ENCODE measurements at regions of chr17 and their contacts with region 1.

Region 1: GRCh38 chr17:4715063-4715744 is 4.8 kb downstream of the ARRB2 start:
- DNase-seq: peak in 8 of 9 donors; percentile 39 to 49 (median 46)
- ATAC-seq: no peak
- H3K4me3 ChIP-seq: peak overlapping the region; percentile 48
- H3K4me3 Mint-ChIP-seq: peak overlapping the region; percentile 74 to 97 (median 84)
- H3K27ac ChIP-seq: peak overlapping the region; percentile 73
- H3K27ac Mint-ChIP-seq: peak overlapping the region; percentile 89 to 96 (median 93)
- H3K4me1 ChIP-seq: peaks cover 39 to 41% of the 10 kb centered on the region in 2 donors
- H3K4me1 Mint-ChIP-seq: peaks cover 32 to 54% (median 47%) of the 10 kb centered on the region in 7 donors
- H3K27me3 ChIP-seq: no peaks in the 10 kb centered on the region
- H3K27me3 Mint-ChIP-seq: no peaks in the 10 kb centered on the region

Region 2: DNA sequence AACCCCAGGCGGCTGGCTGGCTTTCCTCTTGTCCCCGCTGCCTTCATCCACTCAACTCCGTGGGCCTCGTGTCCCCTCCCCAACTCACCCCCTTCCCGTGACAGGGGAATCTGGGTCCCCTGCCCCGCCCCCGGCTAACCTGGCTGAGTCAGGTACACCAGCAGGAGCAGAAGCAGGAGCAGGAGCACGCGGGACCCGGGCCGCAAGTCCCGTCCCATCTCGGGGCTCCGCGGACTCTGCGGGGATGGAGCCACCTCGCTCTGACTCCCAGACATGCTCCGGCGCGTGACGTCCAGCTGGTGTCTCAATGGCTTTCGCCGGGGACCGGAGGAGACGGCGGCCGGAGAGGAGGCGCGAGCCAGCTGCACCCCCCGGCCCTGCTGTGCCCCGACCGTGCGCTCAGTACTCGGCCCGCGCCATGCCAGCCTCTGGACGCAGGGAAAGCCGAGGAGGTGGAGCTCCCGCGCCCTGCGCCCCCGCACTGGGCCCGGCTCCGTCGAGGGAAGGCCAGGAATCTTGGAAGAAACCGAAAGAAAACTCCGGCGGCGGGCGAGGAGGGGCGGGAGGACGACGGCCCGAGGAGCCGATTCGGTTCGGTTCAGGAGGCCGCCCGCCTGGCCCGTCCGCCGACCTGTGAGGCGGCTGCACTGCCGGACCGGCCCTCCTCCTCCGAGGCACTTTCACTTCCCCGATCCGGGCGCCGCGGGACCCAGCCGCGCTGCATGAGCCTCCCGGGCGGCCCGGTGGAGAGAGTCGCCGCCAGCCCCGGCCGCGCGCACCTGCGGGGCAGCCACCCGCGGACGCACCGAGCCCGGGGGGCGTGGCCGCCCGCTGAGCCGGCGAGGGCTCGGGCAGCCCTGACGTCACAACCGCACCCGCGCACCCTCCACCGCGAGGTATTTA is 24.2 kb after region 1 on chr17 and contains the starts of genes CXCL16 and ZMYND15:
- CTCF ChIA-PET with region 1: no interaction called
- POLR2A ChIA-PET with region 1: interaction called, 12 read pairs
- intact Hi-C with region 1: no loop called
- DNase-seq: peak; percentile 58 to 71 (median 64)
- ATAC-seq: peak; percentile 70
- H3K4me3 ChIP-seq: peak within 1 kb of the TSS; percentile 72
- H3K4me3 Mint-ChIP-seq: peak within 1 kb of the TSS; percentile 85 to 95 (median 92)
- H3K27ac ChIP-seq: peak within 1 kb of the TSS; percentile 49
- H3K27ac Mint-ChIP-seq: peak within 1 kb of the TSS; percentile 51 to 97 (median 92)
- H3K4me1 ChIP-seq: peaks cover 12 to 15% of the 10 kb centered on the region in 2 donors
- H3K4me1 Mint-ChIP-seq: peaks cover 12 to 25% (median 18%) of the 10 kb centered on the region in 7 donors
- H3K27me3 ChIP-seq: no peaks in the 10 kb centered on the region
- H3K27me3 Mint-ChIP-seq: peaks cover 0 to 36% (median 6%) of the 10 kb centered on the region in 5 donors
- total RNA-seq, gene CXCL16: 2.6 to 68.0 (median 3.4) TPM
- total RNA-seq, gene ZMYND15: 0.22 to 5.2 (median 1.4) TPM in 4 of 5 experiments, not detected in the other

Region 3: DNA sequence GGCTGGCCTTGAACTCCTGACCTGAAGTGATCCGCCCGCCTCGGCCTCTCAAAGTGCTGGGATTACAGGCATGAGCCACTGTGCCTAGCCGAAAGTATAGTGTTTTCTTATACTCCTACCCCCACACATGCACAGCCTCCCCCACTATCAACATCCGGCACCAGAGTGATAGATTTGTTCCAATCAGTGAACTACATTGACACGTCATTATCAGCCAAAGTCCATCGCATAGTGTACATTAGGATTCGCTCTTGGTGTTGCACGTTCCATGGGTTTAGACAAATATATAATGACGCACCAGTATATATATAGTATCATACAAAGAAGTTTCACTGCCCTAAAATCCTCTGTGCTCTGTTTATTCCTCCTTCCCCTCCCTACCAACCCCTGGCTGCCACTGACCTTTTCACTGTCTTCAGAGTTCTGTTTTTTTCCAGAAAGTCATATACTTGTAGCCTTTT is 44.6 kb after region 1 on chr17:
- CTCF ChIA-PET with region 1: no interaction called
- POLR2A ChIA-PET with region 1: no interaction called
- intact Hi-C with region 1: no loop called
- DNase-seq: no peak
- ATAC-seq: peak; percentile 67
- H3K4me3 ChIP-seq: no peak overlapping the region
- H3K4me3 Mint-ChIP-seq: no peak overlapping the region
- H3K27ac ChIP-seq: no peak overlapping the region
- H3K27ac Mint-ChIP-seq: no peak overlapping the region
- H3K4me1 ChIP-seq: no peaks in the 10 kb centered on the region
- H3K4me1 Mint-ChIP-seq: no peaks in the 10 kb centered on the region
- H3K27me3 ChIP-seq: no peaks in the 10 kb centered on the region
- H3K27me3 Mint-ChIP-seq: peaks cover 6 to 37% (median 7%) of the 10 kb centered on the region in 5 donors

Region 4: GRCh38 chr17:4771519-4772234 is 56.5 kb after region 1 on chr17 and contains the start of gene TM4SF5:
- CTCF ChIA-PET with region 1: no interaction called
- POLR2A ChIA-PET with region 1: no interaction called
- intact Hi-C with region 1: no loop called
- DNase-seq: no peak
- ATAC-seq: no peak
- H3K4me3 ChIP-seq: no peak within 1 kb of the TSS
- H3K4me3 Mint-ChIP-seq: peak within 1 kb of the TSS in 1 of 10 donors; percentile 64
- H3K27ac ChIP-seq: no peak within 1 kb of the TSS
- H3K27ac Mint-ChIP-seq: peak within 1 kb of the TSS in 2 of 9 donors; percentile 54 to 82
- H3K4me1 ChIP-seq: peaks cover 0 to 7% of the 10 kb centered on the region in 2 donors
- H3K4me1 Mint-ChIP-seq: peaks cover 6 to 17% (median 7%) of the 10 kb centered on the region in 7 donors
- H3K27me3 ChIP-seq: no peaks in the 10 kb centered on the region
- H3K27me3 Mint-ChIP-seq: peaks cover 0 to 12% (median 6%) of the 10 kb centered on the region in 5 donors
- total RNA-seq, gene TM4SF5: not detected